ENCODE measurements at regions of chr3 and their contacts with region 1.

Region 1: GRCh38 chr3:68893600-68894239 is 38.6 kb downstream of the TAFA4 start:
- DNase-seq: peak; percentile 5 to 36 (median 12)
- ATAC-seq: no peak
- H3K4me3 ChIP-seq: no peak overlapping the region
- H3K27ac ChIP-seq: no peak overlapping the region
- H3K4me1 ChIP-seq: no peaks in the 10 kb centered on the region
- H3K27me3 ChIP-seq: no peaks in the 10 kb centered on the region
- CTCF ChIP-seq: peak in 2 of 3 experiments; percentile 15 to 56; a peak in 3 of 6 replicates
- EP300 ChIP-seq: no peak
- POLR2A ChIP-seq: no peak
- RAD21 ChIP-seq: peak; percentile 24 to 55; a peak in 3 of 4 replicates

Region 2: DNA sequence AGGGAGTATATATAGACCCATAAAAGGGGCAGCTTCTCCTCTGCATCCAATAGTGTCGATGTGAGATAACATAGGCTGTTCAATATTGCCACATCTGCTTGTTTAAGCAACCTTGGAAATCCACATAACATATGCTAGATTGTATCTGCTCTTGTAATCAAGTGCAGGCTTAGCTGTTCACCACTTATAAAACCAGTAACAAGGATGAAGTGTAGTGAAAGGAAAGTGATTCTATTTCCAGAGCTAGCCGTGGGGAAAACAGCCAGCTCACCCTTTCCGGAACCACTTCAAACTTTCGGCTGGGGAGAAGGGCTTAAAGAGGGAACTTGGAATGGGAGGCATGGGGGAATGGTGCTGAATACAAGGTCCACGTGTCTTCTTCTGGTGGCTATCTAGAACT is 165.4 kb before region 1 on chr3:
- CTCF ChIA-PET with region 1: no interaction called
- POLR2A ChIA-PET with region 1: no interaction called
- in situ Hi-C with region 1: no loop called
- intact Hi-C with region 1: no loop called
- DNase-seq: no peak
- ATAC-seq: no peak
- H3K4me3 ChIP-seq: no peak overlapping the region
- H3K27ac ChIP-seq: no peak overlapping the region
- H3K4me1 ChIP-seq: no peaks in the 10 kb centered on the region
- H3K27me3 ChIP-seq: no peaks in the 10 kb centered on the region
- CTCF ChIP-seq: no peak
- EP300 ChIP-seq: no peak
- POLR2A ChIP-seq: no peak
- RAD21 ChIP-seq: no peak

Region 3: DNA sequence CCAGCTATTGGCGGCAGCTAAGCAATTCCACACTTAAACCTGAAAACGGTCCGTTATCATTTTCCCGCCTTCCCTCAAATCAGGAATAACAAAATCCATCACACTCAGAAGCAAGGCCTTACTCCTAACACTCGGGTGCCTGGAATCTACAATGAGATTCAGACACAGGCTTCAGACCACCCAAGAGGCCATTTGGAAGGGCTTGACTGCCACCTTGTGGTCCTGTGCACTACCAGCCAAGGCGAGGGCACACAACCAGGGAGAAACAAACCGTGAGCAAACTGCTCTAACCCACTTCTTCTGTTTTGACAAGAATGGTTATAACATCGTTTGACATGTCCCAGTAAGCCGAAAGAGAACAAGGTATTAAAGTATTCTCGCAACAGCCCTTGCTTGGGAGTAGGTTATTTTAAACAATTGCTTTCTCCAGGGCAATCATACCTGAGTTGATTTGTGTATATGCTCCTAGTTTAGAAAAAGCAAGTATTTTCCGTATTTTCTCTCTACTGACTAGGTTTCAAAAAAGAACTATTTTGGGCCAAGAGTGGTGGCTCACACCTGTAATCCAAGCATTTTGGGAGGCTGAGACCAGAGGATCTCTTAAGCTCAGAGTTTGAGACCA is 78.7 kb after region 1 on chr3:
- CTCF ChIA-PET with region 1: interaction called, 4 read pairs
- POLR2A ChIA-PET with region 1: no interaction called
- in situ Hi-C with region 1: no loop called
- intact Hi-C with region 1: loop called (anchors 2 kb)
- DNase-seq: peak; percentile 33 to 69 (median 42)
- ATAC-seq: peak; percentile 98
- H3K4me3 ChIP-seq: no peak overlapping the region
- H3K27ac ChIP-seq: no peak overlapping the region
- H3K4me1 ChIP-seq: no peaks in the 10 kb centered on the region
- H3K27me3 ChIP-seq: no peaks in the 10 kb centered on the region; a peak in 2 of 5 replicates
- CTCF ChIP-seq: peak; percentile 72 to 80 (median 75)
- EP300 ChIP-seq: no peak
- POLR2A ChIP-seq: no peak
- RAD21 ChIP-seq: peak; percentile 63 to 78

Measured in K562 (cell line).